ENCODE measurements at regions of chr4 and their contacts with region 1.

Region 1: GRCh38 chr4:118850488-118851173 is 14.7 kb upstream of the SEC24D start:
- DNase-seq: peak; percentile 67
- H3K4me3 Mint-ChIP-seq: peak overlapping the region; percentile 89
- H3K27ac Mint-ChIP-seq: peak overlapping the region; percentile 89
- H3K4me1 Mint-ChIP-seq: peaks cover 26% of the 10 kb centered on the region
- H3K27me3 Mint-ChIP-seq: peaks cover 14% of the 10 kb centered on the region

Region 2: DNA sequence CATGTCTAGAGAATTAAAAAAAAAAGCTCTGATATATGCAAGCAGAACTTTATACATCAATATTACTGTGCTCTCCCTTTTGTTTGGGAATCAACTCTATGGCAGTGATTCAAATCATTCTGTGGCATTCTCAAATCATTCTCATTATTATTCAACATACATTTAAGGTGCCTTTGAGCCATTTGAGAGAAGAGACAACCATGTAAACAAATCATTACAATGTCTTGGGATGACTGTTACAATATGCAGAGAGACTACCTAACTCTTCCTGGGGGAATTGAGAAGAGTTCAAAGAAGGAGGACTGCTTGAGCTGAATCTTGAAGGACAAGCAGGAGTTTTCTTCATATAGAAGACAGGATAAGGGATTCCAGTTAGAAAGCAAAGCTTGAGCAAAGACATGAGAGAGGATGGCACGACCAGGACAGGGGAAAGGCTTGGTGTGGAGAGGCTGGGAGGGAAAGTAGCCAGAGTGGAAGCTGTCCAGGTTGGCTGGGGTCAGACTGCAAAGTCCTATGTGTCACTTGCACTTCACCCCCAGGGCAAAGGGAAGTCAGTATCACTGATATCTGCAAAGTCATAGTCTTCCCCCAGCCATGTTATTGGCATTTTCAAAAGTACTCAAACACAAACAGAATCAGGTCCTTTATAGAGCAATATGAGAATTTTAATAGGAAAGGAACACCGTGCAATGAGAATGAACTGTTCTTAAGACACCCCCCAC is 23.7 kb before region 1 on chr4:
- CTCF ChIA-PET with region 1: no interaction called
- DNase-seq: no peak
- H3K4me3 Mint-ChIP-seq: no peak overlapping the region
- H3K27ac Mint-ChIP-seq: no peak overlapping the region
- H3K4me1 Mint-ChIP-seq: peaks cover 11% of the 10 kb centered on the region
- H3K27me3 Mint-ChIP-seq: no peaks in the 10 kb centered on the region

Region 3: DNA sequence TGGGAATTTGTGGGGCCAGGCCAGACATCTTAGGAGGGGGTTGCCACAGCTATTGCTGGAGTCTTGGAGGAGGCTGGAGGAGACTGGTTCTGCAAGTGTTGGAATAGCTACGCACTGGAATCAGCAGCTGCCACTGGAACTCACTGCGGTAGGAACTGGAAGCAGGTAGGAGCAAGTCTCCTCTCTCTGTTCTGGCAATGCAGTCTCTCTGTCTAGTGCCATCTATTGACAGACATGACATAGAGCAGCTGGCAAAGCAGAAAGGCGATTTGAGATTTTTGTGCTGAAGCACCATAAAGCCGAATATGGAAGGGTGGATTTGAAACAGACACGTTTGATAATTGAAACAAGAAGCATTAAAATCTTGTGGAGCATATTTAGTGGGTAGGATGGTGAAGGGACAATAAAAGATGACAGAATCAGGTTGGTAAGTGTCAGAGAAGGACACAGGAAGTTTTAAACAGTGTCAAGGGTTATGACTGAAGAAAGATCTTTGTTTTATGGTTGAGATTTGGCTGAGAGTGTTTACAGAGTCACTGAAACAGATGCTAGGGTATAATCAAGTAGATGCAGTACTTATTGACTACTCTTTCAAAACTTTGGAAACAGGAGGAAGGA is 14.6 kb after region 1 on chr4:
- CTCF ChIA-PET with region 1: interaction called, 11 read pairs
- DNase-seq: peak; percentile 34
- H3K4me3 Mint-ChIP-seq: no peak overlapping the region
- H3K27ac Mint-ChIP-seq: no peak overlapping the region
- H3K4me1 Mint-ChIP-seq: peaks cover 4% of the 10 kb centered on the region
- H3K27me3 Mint-ChIP-seq: peaks cover 4% of the 10 kb centered on the region

Measured in activated naive CD4-positive, alpha-beta T cell treated with anti-CD3 and anti-CD28 coated beads, Interleukin-2, amount 10 ng/mL, durations not matched to agents 7 days and 5 days (primary cell).